Sigmoid colon (tissue), 7 donors: ENCODE measurements at regions of chr17 and their contacts with region 1.

Region 1: GRCh38 chr17:37123941-37124820 is 175.4 kb downstream of the AATF start:
- DNase-seq: no peak
- H3K4me3 ChIP-seq: no peak overlapping the region
- H3K27ac ChIP-seq: peak overlapping the region in 2 of 4 donors; percentile 17 to 39
- H3K4me1 ChIP-seq: peaks cover 0 to 18% (median 12%) of the 10 kb centered on the region in 4 donors
- H3K27me3 ChIP-seq: no peaks in the 10 kb centered on the region
- CTCF ChIP-seq: no peak
- EP300 ChIP-seq: no peak
- POLR2A ChIP-seq: no peak

Region 2: GRCh38 chr17:37179893-37180292 is 55.7 kb after region 1 on chr17:
- intact Hi-C with region 1: loop called (anchors 10 kb)
- DNase-seq: no peak
- H3K4me3 ChIP-seq: no peak overlapping the region
- H3K27ac ChIP-seq: no peak overlapping the region
- H3K4me1 ChIP-seq: no peaks in the 10 kb centered on the region
- H3K27me3 ChIP-seq: no peaks in the 10 kb centered on the region
- CTCF ChIP-seq: no peak
- EP300 ChIP-seq: no peak
- POLR2A ChIP-seq: no peak